Head of caudate nucleus (tissue), 42 donors: ENCODE measurements at regions of chr17 and their contacts with region 1.

Region 1: DNA sequence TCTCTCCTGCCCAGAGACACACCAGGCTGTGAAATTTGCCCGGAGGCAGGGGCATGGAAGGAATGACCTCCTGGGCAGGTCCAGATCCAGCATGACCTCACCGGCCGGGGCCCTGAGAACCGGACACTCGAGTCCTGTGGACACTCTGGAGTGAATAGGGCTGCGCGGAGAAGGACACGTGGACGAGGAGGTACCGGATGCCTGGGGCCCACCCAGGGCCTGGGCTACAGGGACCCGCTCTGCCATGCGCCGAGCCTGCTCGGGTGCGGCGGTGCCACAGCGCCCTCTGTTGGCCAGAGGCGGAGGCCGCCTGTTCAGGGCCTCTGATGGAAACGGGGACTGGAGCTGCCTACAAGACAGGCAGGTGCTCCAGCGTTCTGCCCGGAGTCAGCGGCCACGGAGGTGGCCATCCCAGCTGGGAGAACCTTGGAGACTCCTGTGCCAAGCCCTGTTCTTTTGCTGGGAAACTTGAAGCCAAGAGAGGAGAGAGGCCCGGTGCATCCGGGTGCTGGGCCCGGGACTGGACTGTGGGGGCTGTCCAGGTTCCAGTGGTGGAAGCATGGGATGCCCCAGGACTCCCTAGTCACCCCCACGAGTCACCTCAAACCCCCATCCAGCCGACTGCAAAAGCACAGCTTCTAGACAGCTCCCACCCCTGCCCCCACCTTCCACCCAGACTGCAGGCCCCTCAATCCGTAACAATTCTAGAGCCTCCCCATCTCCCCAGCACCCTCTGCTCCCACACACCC is 19.3 kb upstream of the NXPH3 start:
- DNase-seq: peak; percentile 45 to 92 (median 84)

Region 2: GRCh38 chr17:49407981-49408501 is 148.4 kb before region 1 on chr17:
- intact Hi-C with region 1: loop called (anchors 10 kb)
- DNase-seq: peak; percentile 45 to 89 (median 79)

Region 3: GRCh38 chr17:49434821-49435670 is 121.4 kb before region 1 on chr17:
- intact Hi-C with region 1: loop called (anchors 5 kb)
- DNase-seq: peak in 37 of 42 donors; percentile 14 to 90 (median 54)

Region 4: DNA sequence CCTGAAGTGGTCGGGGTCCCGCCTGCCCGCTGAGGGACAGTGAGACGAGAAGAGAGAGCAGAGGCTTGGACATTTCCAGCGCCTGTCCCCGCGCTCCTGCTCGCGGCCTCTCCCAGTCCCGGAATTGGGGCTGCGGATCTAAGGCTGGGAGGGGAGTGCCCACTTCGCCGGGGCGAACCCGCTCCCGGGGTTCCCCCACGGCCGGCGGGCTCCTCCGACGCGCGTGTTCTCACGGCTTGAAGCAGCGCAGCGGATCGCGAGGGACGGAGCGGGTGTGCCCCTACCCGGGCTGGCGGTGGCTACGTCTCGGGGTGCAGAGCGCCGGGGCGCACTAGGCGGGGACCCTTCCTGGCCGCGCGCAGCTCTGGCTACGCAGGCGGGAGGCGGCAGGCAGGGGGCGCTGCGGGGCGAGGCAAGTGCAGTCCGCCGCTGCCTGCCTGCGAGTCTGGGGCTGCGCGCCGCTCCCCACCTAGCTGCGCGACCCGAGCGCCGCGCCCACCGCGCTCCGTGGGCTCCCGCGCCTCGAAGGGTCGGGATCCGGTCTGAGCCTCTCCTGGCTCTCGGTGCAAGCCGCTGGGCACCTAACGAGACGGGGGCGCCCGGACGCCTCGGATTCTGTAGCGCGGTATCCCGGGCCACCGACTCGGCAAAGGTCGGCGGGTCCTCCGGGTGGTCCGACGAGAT is 60.1 kb before region 1 on chr17:
- intact Hi-C with region 1: loop called (anchors 5 kb)
- DNase-seq: peak; percentile 40 to 94 (median 82)